Heart left ventricle (tissue), 16 donors: ENCODE measurements at regions of chr4 and their contacts with region 1.

Region 1: DNA sequence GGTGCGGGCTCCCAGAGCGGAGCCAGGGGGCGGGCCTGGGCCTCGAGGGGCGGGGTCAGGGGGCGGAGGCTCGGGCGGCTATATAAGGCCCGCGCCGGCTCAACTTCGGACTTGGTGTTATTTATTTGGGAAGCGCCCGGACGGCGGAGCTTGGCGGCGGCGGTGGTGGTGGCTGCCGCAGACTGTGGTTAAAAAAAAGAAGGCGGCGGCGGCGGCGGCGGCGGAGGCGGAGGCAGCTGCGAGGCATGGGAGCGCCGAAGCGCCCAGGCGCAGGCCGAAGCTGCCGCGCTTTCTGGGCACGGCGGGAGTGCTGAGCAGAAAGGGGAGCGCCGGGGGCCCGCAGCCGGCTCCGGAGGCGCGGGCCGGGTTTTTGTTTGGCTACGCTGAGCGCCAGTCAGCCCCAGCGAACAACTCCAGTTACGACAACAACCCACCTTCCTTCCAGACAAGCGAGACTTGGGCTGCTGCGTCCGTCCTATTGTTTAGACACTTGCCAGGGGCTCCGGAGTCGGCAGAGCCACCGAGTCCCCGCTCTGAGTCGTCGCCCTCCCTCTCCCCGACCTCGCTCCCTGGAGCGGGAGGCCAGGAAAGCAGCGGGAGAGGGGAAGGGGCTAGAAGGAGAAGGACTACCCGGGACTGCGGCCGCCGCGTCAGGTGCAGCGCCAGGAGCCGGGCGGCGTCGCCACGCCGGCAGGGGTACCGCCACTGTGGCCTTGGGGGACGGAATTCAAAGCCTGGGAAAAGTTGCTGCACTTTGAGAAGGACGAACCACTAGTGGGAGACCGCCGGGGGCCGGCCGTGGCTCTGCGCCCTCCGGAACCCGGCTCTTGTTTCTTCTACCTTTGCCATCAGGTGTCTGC is at the start of gene SLIT2:
- DNase-seq: peak; percentile 74 to 84 (median 80)
- ATAC-seq: peak; percentile 64 to 92 (median 90)
- H3K4me3 ChIP-seq: peak within 1 kb of the TSS; percentile 30 to 80 (median 62)
- H3K27ac ChIP-seq: peak within 1 kb of the TSS in 9 of 12 donors; percentile 34 to 81 (median 59)
- H3K4me1 ChIP-seq: peaks cover 0 to 43% (median 11%) of the 10 kb centered on the region in 12 donors
- H3K27me3 ChIP-seq: peaks cover 6 to 46% (median 32%) of the 10 kb centered on the region in 9 donors
- CTCF ChIP-seq: peak in 4 of 12 donors; percentile 25 to 41 (median 33)
- POLR2A ChIP-seq: peak in 1 of 2 donors; percentile 79
- total RNA-seq, gene SLIT2: 2.8 to 19.4 (median 4.5) TPM

Region 2: GRCh38 chr4:18689308-18690115 is 1562.5 kb before region 1 on chr4:
- intact Hi-C with region 1: loop called in 2 of 10 experiments (anchors 10 kb)
- DNase-seq: peak in 2 of 5 donors; percentile 16 to 26
- ATAC-seq: peak in 1 of 4 donors; percentile 54
- H3K4me3 ChIP-seq: no peak overlapping the region
- H3K27ac ChIP-seq: no peak overlapping the region
- H3K4me1 ChIP-seq: peaks cover 0 to 10% (median 0%) of the 10 kb centered on the region in 12 donors
- H3K27me3 ChIP-seq: no peaks in the 10 kb centered on the region
- CTCF ChIP-seq: peak; percentile 75 to 89 (median 84)
- POLR2A ChIP-seq: no peak

Region 3: GRCh38 chr4:19224820-19225219 is 1027.2 kb before region 1 on chr4:
- intact Hi-C with region 1: loop called in 8 of 10 experiments (anchors 2 to 10 kb)
- DNase-seq: no peak
- ATAC-seq: no peak
- H3K4me3 ChIP-seq: no peak overlapping the region
- H3K27ac ChIP-seq: no peak overlapping the region
- H3K4me1 ChIP-seq: no peaks in the 10 kb centered on the region
- H3K27me3 ChIP-seq: no peaks in the 10 kb centered on the region
- CTCF ChIP-seq: peak; percentile 21 to 61 (median 39)
- POLR2A ChIP-seq: no peak

Region 4: GRCh38 chr4:19239565-19239964 is 1012.5 kb before region 1 on chr4:
- intact Hi-C with region 1: loop called in 1 of 10 experiments (anchors 10 kb)
- DNase-seq: no peak
- ATAC-seq: no peak
- H3K4me3 ChIP-seq: no peak overlapping the region
- H3K27ac ChIP-seq: no peak overlapping the region
- H3K4me1 ChIP-seq: no peaks in the 10 kb centered on the region
- H3K27me3 ChIP-seq: no peaks in the 10 kb centered on the region
- CTCF ChIP-seq: no peak
- POLR2A ChIP-seq: no peak

Region 5: DNA sequence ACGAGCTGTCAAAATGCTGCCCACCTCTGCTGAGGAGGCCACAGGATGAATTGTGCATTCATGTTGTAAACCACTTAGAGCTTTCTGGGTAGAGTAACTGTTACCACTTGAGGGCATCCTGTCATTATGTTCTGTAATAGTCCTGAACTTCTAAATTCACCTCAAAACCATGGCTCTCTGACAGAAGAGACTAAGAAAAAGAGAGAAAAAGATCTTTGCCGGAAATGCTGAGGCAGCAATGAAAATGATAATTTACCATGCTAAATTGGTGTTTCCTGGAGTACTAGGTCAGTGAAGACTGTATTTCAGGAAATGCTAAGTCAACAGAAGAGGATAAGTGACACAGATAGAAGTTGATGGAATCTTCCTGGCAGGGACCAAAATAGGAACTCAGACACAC is 942.6 kb before region 1 on chr4:
- intact Hi-C with region 1: loop called in 1 of 10 experiments (anchors 10 kb)
- DNase-seq: no peak
- ATAC-seq: peak in 1 of 4 donors; percentile 50
- H3K4me3 ChIP-seq: no peak overlapping the region
- H3K27ac ChIP-seq: no peak overlapping the region
- H3K4me1 ChIP-seq: peaks cover 0 to 7% (median 0%) of the 10 kb centered on the region in 12 donors
- H3K27me3 ChIP-seq: no peaks in the 10 kb centered on the region
- CTCF ChIP-seq: peak in 7 of 12 donors; percentile 6 to 47 (median 26)
- POLR2A ChIP-seq: no peak

Region 6: GRCh38 chr4:20172070-20172760 is 79.8 kb before region 1 on chr4:
- intact Hi-C with region 1: no loop called
- DNase-seq: no peak
- ATAC-seq: no peak
- H3K4me3 ChIP-seq: no peak overlapping the region
- H3K27ac ChIP-seq: no peak overlapping the region
- H3K4me1 ChIP-seq: no peaks in the 10 kb centered on the region
- H3K27me3 ChIP-seq: no peaks in the 10 kb centered on the region
- CTCF ChIP-seq: no peak
- POLR2A ChIP-seq: no peak

Region 7: DNA sequence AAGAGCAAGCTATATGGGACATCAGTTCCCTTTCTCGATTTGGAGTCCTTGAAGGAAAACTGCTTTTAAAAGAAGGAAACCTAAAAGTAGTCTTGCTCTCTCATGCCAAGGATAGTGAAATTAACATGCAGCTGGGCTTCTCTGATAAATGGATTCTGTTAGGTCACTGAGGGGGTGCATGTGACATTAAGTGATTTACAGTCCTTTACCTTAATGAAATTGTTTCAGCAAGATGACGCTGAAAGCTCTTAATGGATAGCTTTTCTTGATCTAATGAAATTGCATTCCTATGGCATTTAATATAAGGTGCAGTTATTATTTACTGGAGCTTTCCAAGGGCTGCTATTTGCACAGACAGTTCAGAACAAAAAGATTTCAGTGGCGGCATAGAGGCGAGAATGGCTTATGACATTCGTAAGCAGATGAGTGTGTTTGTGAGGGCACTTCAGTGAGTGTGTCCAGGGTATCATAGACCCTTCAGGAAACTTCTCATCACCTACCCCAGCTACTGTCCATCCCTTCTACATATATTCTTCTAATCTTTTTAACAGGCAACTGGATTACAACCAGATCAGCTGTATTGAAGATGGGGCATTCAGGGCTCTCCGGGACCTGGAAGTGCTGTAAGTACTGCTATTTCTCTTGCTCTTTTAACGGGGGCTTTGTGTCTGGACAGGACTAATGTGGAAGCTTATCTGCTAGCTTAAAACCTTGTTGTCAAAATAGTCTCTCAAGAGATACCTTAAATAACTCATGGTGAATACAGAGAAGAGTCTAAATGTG is 228.3 kb after region 1 on chr4:
- intact Hi-C with region 1: no loop called
- DNase-seq: no peak
- ATAC-seq: no peak
- H3K4me3 ChIP-seq: no peak overlapping the region
- H3K27ac ChIP-seq: no peak overlapping the region
- H3K4me1 ChIP-seq: no peaks in the 10 kb centered on the region
- H3K27me3 ChIP-seq: no peaks in the 10 kb centered on the region
- CTCF ChIP-seq: no peak
- POLR2A ChIP-seq: no peak